ENCODE measurements at regions of chr21 and their contacts with region 1.

Region 1: DNA sequence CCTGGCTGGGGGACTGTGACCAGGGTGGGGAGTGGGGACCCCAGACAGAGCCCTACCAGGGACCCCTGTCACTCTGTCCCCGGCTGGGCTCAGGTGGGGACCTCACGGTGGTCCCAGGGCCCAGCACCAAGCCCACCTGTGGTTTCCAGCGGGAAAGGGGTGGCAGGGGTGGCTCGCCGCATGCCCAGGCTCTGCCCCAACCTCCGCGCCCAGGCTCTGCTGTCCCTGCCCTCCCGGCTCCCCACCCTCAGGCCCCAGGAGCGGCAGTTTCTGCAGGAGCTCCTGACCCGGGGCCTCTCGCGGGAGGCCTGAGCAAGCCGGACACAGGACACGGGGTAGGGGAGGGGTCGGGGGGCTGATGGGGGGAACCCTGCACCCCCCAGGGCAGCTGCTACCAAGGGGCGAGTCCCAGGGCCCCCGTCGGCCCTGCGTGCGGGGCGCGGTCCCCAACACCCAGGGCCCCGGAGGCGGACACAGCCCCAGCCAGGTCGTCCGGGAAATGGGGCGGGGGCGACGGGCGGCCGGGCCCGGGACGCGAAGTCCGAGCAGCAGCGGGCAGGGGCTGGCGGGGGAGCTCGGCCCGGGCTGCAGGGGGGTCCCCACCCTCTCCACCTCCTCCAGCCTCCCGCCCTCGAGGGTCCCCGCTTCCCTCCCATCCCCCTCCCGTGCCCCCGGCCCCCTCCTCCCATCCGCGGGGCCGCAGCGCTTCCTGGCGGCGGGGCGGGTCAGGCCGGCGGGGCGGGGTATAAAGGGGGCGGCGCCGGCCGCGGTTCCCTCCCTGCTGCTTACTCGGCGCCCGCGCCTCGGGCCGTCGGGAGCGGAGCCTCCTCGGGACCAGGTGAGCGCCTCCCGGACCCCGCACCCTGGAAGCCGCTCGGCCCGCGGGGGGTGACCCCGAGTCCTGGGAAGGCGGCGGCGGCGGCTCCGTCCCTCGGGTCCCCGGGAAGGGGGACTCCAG is at the start of gene COL6A2:
- DNase-seq: peak; percentile 67
- H3K4me3 ChIP-seq: peak within 1 kb of the TSS; percentile 70 to 74
- H3K27ac ChIP-seq: peak within 1 kb of the TSS; percentile 69 to 94
- H3K4me1 ChIP-seq: peaks cover 3% of the 10 kb centered on the region
- H3K27me3 ChIP-seq: no peaks in the 10 kb centered on the region
- CTCF ChIP-seq: peak in 1 of 3 experiments; percentile 24
- POLR2A ChIP-seq: no peak
- total RNA-seq, gene COL6A2: 192 to 236 TPM

Region 2: GRCh38 chr21:45973659-45974072 is 123.9 kb before region 1 on chr21:
- intact Hi-C with region 1: loop called (anchors 5 kb)
- DNase-seq: peak; percentile 78
- H3K4me3 ChIP-seq: peak overlapping the region; percentile 47 to 58
- H3K27ac ChIP-seq: peak overlapping the region; percentile 82 to 90
- H3K4me1 ChIP-seq: peaks cover 49% of the 10 kb centered on the region
- H3K27me3 ChIP-seq: no peaks in the 10 kb centered on the region
- CTCF ChIP-seq: peak in 2 of 3 experiments; percentile 53
- POLR2A ChIP-seq: no peak

Region 3: GRCh38 chr21:46219591-46220239 is 122.1 kb after region 1 on chr21:
- intact Hi-C with region 1: no loop called
- DNase-seq: peak; percentile 12
- H3K4me3 ChIP-seq: no peak overlapping the region
- H3K27ac ChIP-seq: no peak overlapping the region
- H3K4me1 ChIP-seq: no peaks in the 10 kb centered on the region
- H3K27me3 ChIP-seq: no peaks in the 10 kb centered on the region
- CTCF ChIP-seq: no peak
- POLR2A ChIP-seq: no peak

Measured in testis (tissue), 5 donors.